CD4-positive, alpha-beta T cell (primary cell): ENCODE measurements at regions of chr12 and their contacts with region 1.

Region 1: GRCh38 chr12:112906712-112907414 is at the start of gene OAS1:
- DNase-seq: peak in 8 of 14 experiments; percentile 13 to 78 (median 50)
- ATAC-seq: peak; percentile 71
- H3K4me3 ChIP-seq: peak within 1 kb of the TSS; percentile 66
- H3K4me3 Mint-ChIP-seq: peak within 1 kb of the TSS; percentile 87
- H3K27ac ChIP-seq: peak within 1 kb of the TSS; percentile 59 to 66
- H3K27ac Mint-ChIP-seq: peak within 1 kb of the TSS; percentile 82
- H3K4me1 ChIP-seq: peaks cover 57% of the 10 kb centered on the region
- H3K4me1 Mint-ChIP-seq: peaks cover 94% of the 10 kb centered on the region
- H3K27me3 ChIP-seq: no peaks in the 10 kb centered on the region
- H3K27me3 Mint-ChIP-seq: no peaks in the 10 kb centered on the region
- CTCF ChIP-seq: no peak
- total RNA-seq, gene OAS1: 2.6 to 3.4 TPM

Region 2: GRCh38 chr12:112937741-112938719 is 31.2 kb after region 1 on chr12 and contains the start of gene OAS3:
- CTCF ChIA-PET with region 1: no interaction called
- POLR2A ChIA-PET with region 1: interaction called, 18 read pairs
- intact Hi-C with region 1: loop called (anchors 2 to 5 kb)
- DNase-seq: peak; percentile 33 to 92 (median 54)
- ATAC-seq: peak; percentile 66
- H3K4me3 ChIP-seq: peak within 1 kb of the TSS; percentile 82
- H3K4me3 Mint-ChIP-seq: peak within 1 kb of the TSS; percentile 93
- H3K27ac ChIP-seq: peak within 1 kb of the TSS; percentile 57 to 85
- H3K27ac Mint-ChIP-seq: peak within 1 kb of the TSS; percentile 84
- H3K4me1 ChIP-seq: peaks cover 28% of the 10 kb centered on the region
- H3K4me1 Mint-ChIP-seq: peaks cover 31% of the 10 kb centered on the region
- H3K27me3 ChIP-seq: no peaks in the 10 kb centered on the region
- H3K27me3 Mint-ChIP-seq: no peaks in the 10 kb centered on the region
- CTCF ChIP-seq: no peak
- total RNA-seq, gene OAS3: 13.9 to 14.5 TPM

Region 3: DNA sequence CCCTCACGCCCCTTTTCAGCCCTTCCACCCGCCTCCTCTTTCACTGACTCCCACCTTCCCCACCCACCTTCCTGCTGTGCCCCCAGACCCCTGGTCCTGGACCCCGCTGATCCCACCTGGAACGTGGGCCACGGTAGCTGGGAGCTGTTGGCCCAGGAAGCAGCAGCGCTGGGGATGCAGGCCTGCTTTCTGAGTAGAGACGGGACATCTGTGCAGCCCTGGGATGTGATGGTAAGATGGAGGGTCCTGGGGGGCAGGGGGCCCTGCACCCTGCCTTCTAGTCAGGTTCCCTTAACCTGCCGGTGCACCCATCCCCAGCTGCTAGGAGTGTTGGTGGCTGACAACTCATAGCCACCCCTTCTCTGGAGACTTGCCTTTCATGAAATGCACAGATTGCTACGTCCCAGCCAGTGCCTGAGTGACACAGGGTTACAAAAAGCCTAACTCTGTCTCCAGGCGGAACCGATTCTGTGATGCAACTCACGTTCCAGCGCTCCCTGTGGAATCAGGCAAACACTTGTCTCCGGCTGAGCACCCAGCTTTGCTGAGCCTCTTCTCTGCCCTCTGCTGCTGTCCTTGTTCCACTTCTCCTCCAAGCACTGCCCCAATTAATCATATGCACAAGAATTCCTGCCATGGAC is 56.5 kb after region 1 on chr12:
- CTCF ChIA-PET with region 1: no interaction called
- POLR2A ChIA-PET with region 1: no interaction called
- intact Hi-C with region 1: no loop called
- DNase-seq: no peak
- ATAC-seq: no peak
- H3K4me3 ChIP-seq: no peak overlapping the region
- H3K4me3 Mint-ChIP-seq: no peak overlapping the region
- H3K27ac ChIP-seq: no peak overlapping the region
- H3K27ac Mint-ChIP-seq: no peak overlapping the region
- H3K4me1 ChIP-seq: no peaks in the 10 kb centered on the region
- H3K4me1 Mint-ChIP-seq: peaks cover 8% of the 10 kb centered on the region
- H3K27me3 ChIP-seq: no peaks in the 10 kb centered on the region
- H3K27me3 Mint-ChIP-seq: no peaks in the 10 kb centered on the region
- CTCF ChIP-seq: no peak

Region 4: GRCh38 chr12:112998987-112999767 is 92.3 kb after region 1 on chr12:
- CTCF ChIA-PET with region 1: no interaction called
- POLR2A ChIA-PET with region 1: no interaction called
- intact Hi-C with region 1: no loop called
- DNase-seq: no peak
- ATAC-seq: no peak
- H3K4me3 ChIP-seq: no peak overlapping the region
- H3K4me3 Mint-ChIP-seq: no peak overlapping the region
- H3K27ac ChIP-seq: no peak overlapping the region
- H3K27ac Mint-ChIP-seq: no peak overlapping the region
- H3K4me1 ChIP-seq: no peaks in the 10 kb centered on the region
- H3K4me1 Mint-ChIP-seq: no peaks in the 10 kb centered on the region
- H3K27me3 ChIP-seq: no peaks in the 10 kb centered on the region
- H3K27me3 Mint-ChIP-seq: no peaks in the 10 kb centered on the region
- CTCF ChIP-seq: no peak